ENCODE measurements at regions of chr11 and their contacts with region 1.

Region 1: DNA sequence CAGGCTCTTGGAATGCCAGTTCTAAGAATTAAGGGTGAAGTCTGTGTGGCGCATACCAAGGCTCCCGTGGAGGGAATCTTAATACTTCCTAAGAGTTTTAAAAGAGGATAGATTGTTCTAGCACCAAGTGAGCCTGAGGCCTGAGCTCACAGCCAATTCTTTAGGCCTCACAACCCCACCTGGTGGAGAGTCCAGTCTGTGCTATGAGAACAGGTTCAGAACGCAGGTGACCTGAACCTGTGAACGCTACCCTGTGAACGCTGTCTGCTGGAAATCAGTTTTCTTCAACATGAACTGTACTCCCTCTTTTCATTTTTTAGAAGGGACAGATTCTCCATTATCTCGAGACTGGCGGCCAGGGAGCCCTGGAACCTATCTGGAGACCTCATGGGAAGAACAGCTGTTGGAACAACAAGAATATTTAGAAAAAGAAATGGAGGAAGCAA is 43.2 kb upstream of the DLAT start:
- DNase-seq: peak; percentile 71
- CTCF ChIP-seq: peak; percentile 59

Region 2: DNA sequence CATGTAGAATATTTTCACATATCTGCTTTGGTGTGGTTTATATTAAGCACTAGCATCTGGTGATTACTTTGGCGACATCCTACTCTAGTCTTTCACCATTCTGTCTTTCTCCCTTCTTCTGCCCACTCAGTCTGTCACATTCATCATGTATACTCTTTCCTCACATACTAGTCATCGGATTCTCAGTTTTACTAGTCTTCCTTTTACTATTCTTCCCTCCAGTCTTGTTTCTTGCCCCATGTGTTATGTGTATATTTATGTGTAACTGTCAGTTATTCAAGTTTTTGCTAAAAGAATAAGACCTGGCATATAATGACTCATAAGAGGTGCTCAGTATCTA is 49.5 kb before region 1 on chr11:
- CTCF ChIA-PET with region 1: interaction called, 138 read pairs
- POLR2A ChIA-PET with region 1: no interaction called
- DNase-seq: no peak
- CTCF ChIP-seq: no peak

Region 3: DNA sequence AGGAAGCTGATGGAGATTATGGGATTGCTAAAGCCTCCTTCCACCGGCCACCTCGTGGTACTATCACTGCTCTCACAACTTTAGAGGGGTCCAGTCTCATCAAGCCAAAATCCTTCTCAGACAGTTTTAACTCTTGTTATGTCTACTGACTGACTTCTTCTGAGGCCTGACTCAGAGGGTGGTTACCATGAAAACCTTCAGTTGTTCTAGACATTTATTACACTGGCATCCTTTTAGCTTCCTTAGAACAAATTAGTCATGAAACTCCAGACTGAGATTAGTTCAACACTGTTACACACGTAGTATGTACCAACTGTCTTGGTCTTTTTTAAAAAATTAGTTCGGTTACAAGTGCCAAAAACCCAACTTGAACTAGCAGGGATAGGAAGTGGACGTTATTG is 37.4 kb before region 1 on chr11:
- CTCF ChIA-PET with region 1: interaction called, 138 read pairs
- POLR2A ChIA-PET with region 1: no interaction called
- DNase-seq: no peak
- CTCF ChIP-seq: no peak

Region 4: GRCh38 chr11:111992206-111992855 is 10.3 kb after region 1 on chr11:
- CTCF ChIA-PET with region 1: interaction called, 14 read pairs
- POLR2A ChIA-PET with region 1: no interaction called
- DNase-seq: no peak
- CTCF ChIP-seq: no peak

Region 5: GRCh38 chr11:112016765-112017356 is 34.8 kb after region 1 on chr11:
- CTCF ChIA-PET with region 1: interaction called, 12 read pairs
- POLR2A ChIA-PET with region 1: no interaction called
- DNase-seq: no peak
- CTCF ChIP-seq: no peak

Measured in GM10248 (cell line).